CD4-positive, alpha-beta memory T cell (primary cell): ENCODE measurements at regions of chr16 and their contacts with region 1.

Region 1: GRCh38 chr16:80804056-80804450 is 345 bp downstream of the CDYL2 start:
- DNase-seq: peak; percentile 57 to 70 (median 65)
- H3K4me3 ChIP-seq: peak overlapping the region in 1 of 2 donors; percentile 51
- H3K4me3 Mint-ChIP-seq: peak overlapping the region; percentile 80 to 98 (median 96)
- H3K27ac ChIP-seq: no peak overlapping the region
- H3K27ac Mint-ChIP-seq: peak overlapping the region; percentile 74 to 96 (median 86)
- H3K4me1 ChIP-seq: peaks cover 31% of the 10 kb centered on the region
- H3K4me1 Mint-ChIP-seq: peaks cover 12 to 38% (median 27%) of the 10 kb centered on the region in 4 donors
- H3K27me3 ChIP-seq: no peaks in the 10 kb centered on the region
- H3K27me3 Mint-ChIP-seq: no peaks in the 10 kb centered on the region

Region 2: GRCh38 chr16:79770244-79771064 is 1033.6 kb before region 1 on chr16:
- CTCF ChIA-PET with region 1: no interaction called
- POLR2A ChIA-PET with region 1: no interaction called
- intact Hi-C with region 1: loop called (anchors 5 kb)
- DNase-seq: peak; percentile 50 to 70 (median 65)
- H3K4me3 ChIP-seq: peak overlapping the region; percentile 66 to 77
- H3K4me3 Mint-ChIP-seq: peak overlapping the region; percentile 88 to 96 (median 94)
- H3K27ac ChIP-seq: peak overlapping the region; percentile 27
- H3K27ac Mint-ChIP-seq: peak overlapping the region; percentile 85 to 92 (median 89)
- H3K4me1 ChIP-seq: peaks cover 18% of the 10 kb centered on the region
- H3K4me1 Mint-ChIP-seq: peaks cover 14 to 33% (median 19%) of the 10 kb centered on the region in 4 donors
- H3K27me3 ChIP-seq: no peaks in the 10 kb centered on the region
- H3K27me3 Mint-ChIP-seq: no peaks in the 10 kb centered on the region

Region 3: DNA sequence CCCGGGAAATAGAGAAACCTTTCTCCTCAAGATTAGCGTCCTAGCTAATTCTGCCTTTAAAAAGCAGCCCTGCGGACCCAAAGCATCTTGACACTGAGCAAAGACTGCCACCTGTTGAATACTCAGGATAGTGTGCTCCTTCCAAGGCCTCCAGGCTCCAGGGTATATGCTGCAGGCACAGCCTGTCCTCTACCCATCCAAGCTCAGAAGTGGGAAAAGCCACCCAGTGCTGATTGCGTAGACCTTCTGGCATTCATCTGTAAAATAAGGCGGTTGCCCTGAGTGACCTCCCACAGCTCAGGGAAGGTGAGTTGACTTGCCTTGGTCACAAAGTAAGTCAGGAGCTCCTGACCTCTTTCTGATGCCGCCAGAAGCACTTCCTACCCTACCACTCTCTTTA is 719.4 kb before region 1 on chr16:
- CTCF ChIA-PET with region 1: no interaction called
- POLR2A ChIA-PET with region 1: no interaction called
- intact Hi-C with region 1: no loop called
- DNase-seq: peak in 3 of 5 donors; percentile 9 to 38 (median 16)
- H3K4me3 ChIP-seq: no peak overlapping the region
- H3K4me3 Mint-ChIP-seq: no peak overlapping the region
- H3K27ac ChIP-seq: no peak overlapping the region
- H3K27ac Mint-ChIP-seq: no peak overlapping the region
- H3K4me1 ChIP-seq: no peaks in the 10 kb centered on the region
- H3K4me1 Mint-ChIP-seq: no peaks in the 10 kb centered on the region
- H3K27me3 ChIP-seq: no peaks in the 10 kb centered on the region
- H3K27me3 Mint-ChIP-seq: peaks cover 0 to 1% of the 10 kb centered on the region in 2 donors

Region 4: DNA sequence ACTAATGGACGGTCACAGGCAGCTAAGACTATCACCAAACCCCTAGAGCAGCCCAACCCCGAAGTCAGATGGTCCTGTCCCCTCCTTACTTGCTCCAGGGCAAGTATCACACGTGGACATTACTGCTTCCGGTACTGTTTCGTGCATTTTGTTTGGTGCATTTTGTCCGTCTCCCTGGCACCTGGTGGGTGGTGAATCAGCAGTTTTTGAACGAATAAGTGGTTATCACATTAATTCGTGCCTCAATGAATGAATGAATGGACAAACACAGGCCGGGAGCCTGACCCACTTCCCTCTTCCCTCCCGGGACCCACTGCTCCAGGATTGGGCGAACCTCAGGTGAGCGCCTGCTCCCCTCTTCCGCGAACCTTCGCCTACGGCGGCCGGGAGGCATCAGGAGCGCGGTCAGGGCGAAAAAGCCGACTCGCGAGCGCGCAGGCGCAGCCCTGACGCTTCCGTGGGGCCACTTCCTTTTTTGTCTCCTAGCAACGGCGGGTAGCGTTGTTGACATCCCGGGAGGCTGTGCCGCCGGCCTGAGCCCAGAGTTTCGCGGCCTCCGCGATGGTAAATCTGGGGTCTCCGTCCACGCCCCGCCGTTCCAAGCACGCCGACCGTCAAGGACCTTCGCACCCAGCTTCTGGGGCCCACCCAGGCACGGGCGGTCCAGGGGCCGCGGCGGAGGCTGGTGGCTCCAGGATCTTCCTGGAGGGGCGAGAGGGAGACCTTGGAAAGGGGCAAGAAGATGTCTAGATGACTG is 263.4 kb before region 1 on chr16 and contains the start of gene DYNLRB2:
- CTCF ChIA-PET with region 1: interaction called, 3 read pairs
- POLR2A ChIA-PET with region 1: no interaction called
- intact Hi-C with region 1: loop called (anchors 1 kb)
- DNase-seq: peak; percentile 89 to 96 (median 95)
- H3K4me3 ChIP-seq: peak within 1 kb of the TSS; percentile 57 to 97
- H3K4me3 Mint-ChIP-seq: peak within 1 kb of the TSS; percentile 91 to 98 (median 96)
- H3K27ac ChIP-seq: peak within 1 kb of the TSS; percentile 67
- H3K27ac Mint-ChIP-seq: peak within 1 kb of the TSS; percentile 95 to 99 (median 98)
- H3K4me1 ChIP-seq: peaks cover 12% of the 10 kb centered on the region
- H3K4me1 Mint-ChIP-seq: peaks cover 8 to 21% (median 14%) of the 10 kb centered on the region in 4 donors
- H3K27me3 ChIP-seq: no peaks in the 10 kb centered on the region
- H3K27me3 Mint-ChIP-seq: peaks cover 1 to 7% of the 10 kb centered on the region in 2 donors
- total RNA-seq, gene DYNLRB2: 0.78 TPM in 1 of 2 experiments, not detected in the other

Region 5: DNA sequence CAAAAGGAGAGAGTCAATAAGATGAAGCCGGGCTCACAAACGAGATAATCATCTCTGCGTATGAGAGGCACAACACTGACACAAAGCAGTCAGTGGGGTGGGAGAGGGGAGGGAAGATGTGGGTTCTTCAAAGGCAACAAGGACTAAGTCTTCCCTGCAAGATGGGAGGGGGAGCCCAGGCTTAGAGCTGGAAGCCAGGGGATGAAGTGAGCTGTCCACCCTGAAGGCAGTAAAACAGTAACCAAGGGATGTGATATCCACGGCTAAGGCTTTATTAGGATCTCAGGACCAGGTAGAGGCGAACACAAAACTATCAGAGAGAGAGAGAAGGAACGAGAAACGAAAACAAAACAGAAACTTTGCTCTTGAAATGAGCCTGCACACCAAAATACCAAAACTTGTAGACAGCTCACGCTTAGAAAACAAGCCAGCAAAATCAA is 147.3 kb before region 1 on chr16:
- CTCF ChIA-PET with region 1: no interaction called
- POLR2A ChIA-PET with region 1: interaction called, 3 read pairs
- intact Hi-C with region 1: loop called (anchors 5 kb)
- DNase-seq: peak; percentile 46 to 62 (median 51)
- H3K4me3 ChIP-seq: peak overlapping the region; percentile 33 to 72
- H3K4me3 Mint-ChIP-seq: peak overlapping the region; percentile 82 to 97 (median 90)
- H3K27ac ChIP-seq: peak overlapping the region; percentile 52
- H3K27ac Mint-ChIP-seq: peak overlapping the region; percentile 69 to 97 (median 92)
- H3K4me1 ChIP-seq: peaks cover 20% of the 10 kb centered on the region
- H3K4me1 Mint-ChIP-seq: peaks cover 19 to 33% (median 26%) of the 10 kb centered on the region in 4 donors
- H3K27me3 ChIP-seq: no peaks in the 10 kb centered on the region
- H3K27me3 Mint-ChIP-seq: no peaks in the 10 kb centered on the region

Region 6: GRCh38 chr16:81077076-81077940 is 273.3 kb after region 1 on chr16 and contains the start of gene C16orf46:
- CTCF ChIA-PET with region 1: no interaction called
- POLR2A ChIA-PET with region 1: no interaction called
- intact Hi-C with region 1: loop called (anchors 5 kb)
- DNase-seq: peak; percentile 96 to 99 (median 96)
- H3K4me3 ChIP-seq: peak within 1 kb of the TSS; percentile 59 to 75
- H3K4me3 Mint-ChIP-seq: peak within 1 kb of the TSS in 1 of 8 donors; percentile 20
- H3K27ac ChIP-seq: peak within 1 kb of the TSS; percentile 95
- H3K27ac Mint-ChIP-seq: peak within 1 kb of the TSS in 2 of 7 donors; percentile 25 to 66
- H3K4me1 ChIP-seq: peaks cover 13% of the 10 kb centered on the region
- H3K4me1 Mint-ChIP-seq: peaks cover 0 to 4% (median 1%) of the 10 kb centered on the region in 4 donors
- H3K27me3 ChIP-seq: no peaks in the 10 kb centered on the region
- H3K27me3 Mint-ChIP-seq: no peaks in the 10 kb centered on the region
- total RNA-seq, gene C16orf46: 0.29 TPM in 1 of 2 experiments, not detected in the other